Panc1 (cell line): ENCODE measurements at regions of chr6 and their contacts with region 1.

Region 1: GRCh38 chr6:89970609-89971337 is 76.5 kb downstream of the GJA10 start:
- DNase-seq: no peak
- ATAC-seq: peak; percentile 89
- H3K4me3 ChIP-seq: no peak overlapping the region
- H3K27ac ChIP-seq: no peak overlapping the region
- H3K4me1 ChIP-seq: no peaks in the 10 kb centered on the region; the same call in 1 of the 2 replicates
- H3K27me3 ChIP-seq: no peaks in the 10 kb centered on the region
- CTCF ChIP-seq: peak; percentile 72

Region 2: GRCh38 chr6:90008908-90009501 is 38.2 kb after region 1 on chr6:
- CTCF ChIA-PET with region 1: no interaction called
- POLR2A ChIA-PET with region 1: interaction called, 27 read pairs
- in situ Hi-C with region 1: no loop called
- intact Hi-C with region 1: no loop called
- DNase-seq: peak; percentile 22
- ATAC-seq: no peak
- H3K4me3 ChIP-seq: no peak overlapping the region
- H3K27ac ChIP-seq: no peak overlapping the region
- H3K4me1 ChIP-seq: no peaks in the 10 kb centered on the region
- H3K27me3 ChIP-seq: no peaks in the 10 kb centered on the region
- CTCF ChIP-seq: no peak

Region 3: DNA sequence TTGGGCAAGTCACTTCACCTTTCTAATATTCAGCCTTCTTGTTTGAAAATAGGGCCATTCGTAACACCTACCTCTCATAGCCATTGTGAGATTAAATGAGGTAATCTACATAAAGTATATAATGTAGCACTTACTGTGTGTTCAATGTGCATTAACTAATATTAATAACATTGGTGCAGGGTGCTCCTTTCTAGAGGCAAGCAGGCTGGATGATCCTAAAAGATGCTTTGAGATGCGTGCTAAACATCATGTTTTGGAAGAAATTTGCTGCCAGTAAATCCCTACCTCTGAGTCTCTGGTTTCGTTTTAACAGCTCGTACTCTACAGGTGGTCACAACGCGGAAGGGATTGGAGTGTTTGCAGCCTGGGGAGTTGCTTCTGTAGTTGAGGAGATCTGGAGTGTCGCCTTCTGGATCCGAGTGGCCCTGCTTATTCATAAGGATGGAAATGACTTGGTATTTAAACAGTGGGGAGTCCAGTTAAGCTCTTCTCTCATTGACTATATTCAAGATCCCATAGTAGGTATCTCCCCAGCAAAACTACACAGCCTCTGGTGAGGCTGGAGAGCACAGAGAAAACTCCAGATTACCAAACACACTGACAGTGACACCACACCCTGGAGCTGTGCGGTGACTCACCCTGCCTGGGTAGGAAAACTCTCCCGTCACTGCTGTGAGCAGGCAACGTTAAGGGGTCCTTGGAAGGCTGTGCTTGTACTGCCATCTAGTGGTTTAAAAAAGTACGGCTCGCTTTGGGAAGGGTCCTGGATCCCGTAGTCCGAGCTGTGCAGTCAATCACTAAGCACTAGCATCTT is 508.2 kb after region 1 on chr6:
- CTCF ChIA-PET with region 1: no interaction called
- POLR2A ChIA-PET with region 1: no interaction called
- in situ Hi-C with region 1: no loop called
- intact Hi-C with region 1: loop called (anchors 2 kb)
- DNase-seq: peak; percentile 84
- ATAC-seq: peak; percentile 99
- H3K4me3 ChIP-seq: no peak overlapping the region
- H3K27ac ChIP-seq: no peak overlapping the region
- H3K4me1 ChIP-seq: peaks cover 6% of the 10 kb centered on the region
- H3K27me3 ChIP-seq: no peaks in the 10 kb centered on the region
- CTCF ChIP-seq: peak; percentile 86